Naive thymus-derived CD4-positive, alpha-beta T cell (primary cell): ENCODE measurements at regions of chrX and their contacts with region 1.

Region 1: GRCh38 chrX:80876877-80877276 is 67.2 kb upstream of the BRWD3 start:
- DNase-seq: peak in 5 of 9 donors; percentile 2 to 36 (median 23)
- ATAC-seq: no peak
- H3K4me3 ChIP-seq: no peak overlapping the region
- H3K4me3 Mint-ChIP-seq: no peak overlapping the region
- H3K27ac ChIP-seq: no peak overlapping the region
- H3K27ac Mint-ChIP-seq: no peak overlapping the region
- H3K4me1 ChIP-seq: no peaks in the 10 kb centered on the region
- H3K4me1 Mint-ChIP-seq: no peaks in the 10 kb centered on the region
- H3K27me3 ChIP-seq: no peaks in the 10 kb centered on the region
- H3K27me3 Mint-ChIP-seq: no peaks in the 10 kb centered on the region

Region 2: GRCh38 chrX:80747832-80748231 is 129.0 kb before region 1 on chrX:
- CTCF ChIA-PET with region 1: no interaction called
- POLR2A ChIA-PET with region 1: no interaction called
- intact Hi-C with region 1: no loop called
- DNase-seq: no peak
- ATAC-seq: no peak
- H3K4me3 ChIP-seq: no peak overlapping the region
- H3K4me3 Mint-ChIP-seq: no peak overlapping the region
- H3K27ac ChIP-seq: no peak overlapping the region
- H3K27ac Mint-ChIP-seq: peak overlapping the region in 3 of 9 donors; percentile 5 to 6 (median 5)
- H3K4me1 ChIP-seq: no peaks in the 10 kb centered on the region
- H3K4me1 Mint-ChIP-seq: peaks cover 4 to 22% (median 8%) of the 10 kb centered on the region in 7 donors
- H3K27me3 ChIP-seq: no peaks in the 10 kb centered on the region
- H3K27me3 Mint-ChIP-seq: no peaks in the 10 kb centered on the region

Region 3: DNA sequence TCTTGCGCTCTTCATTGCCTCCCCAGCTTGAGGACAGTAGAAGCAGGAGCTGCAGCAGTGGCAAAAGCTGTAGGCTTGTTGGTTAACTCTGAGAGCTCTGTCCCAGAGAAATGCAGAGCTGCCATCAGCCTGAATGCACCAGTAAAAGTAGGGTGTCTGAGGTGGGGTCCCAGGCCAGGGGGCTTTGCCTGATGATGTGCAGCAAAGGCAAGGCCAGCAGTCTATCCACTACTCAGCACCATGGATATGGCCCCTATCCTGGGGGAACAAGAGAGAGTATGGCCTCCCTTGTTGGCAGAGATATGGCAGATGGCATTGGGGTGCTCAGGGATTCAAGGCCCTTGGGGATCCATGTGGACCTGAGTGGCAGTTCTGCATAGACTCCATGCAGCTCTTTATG is 144.6 kb after region 1 on chrX:
- CTCF ChIA-PET with region 1: no interaction called
- POLR2A ChIA-PET with region 1: no interaction called
- intact Hi-C with region 1: no loop called
- DNase-seq: no peak
- ATAC-seq: no peak
- H3K4me3 ChIP-seq: no peak overlapping the region
- H3K4me3 Mint-ChIP-seq: no peak overlapping the region
- H3K27ac ChIP-seq: no peak overlapping the region
- H3K27ac Mint-ChIP-seq: no peak overlapping the region
- H3K4me1 ChIP-seq: no peaks in the 10 kb centered on the region
- H3K4me1 Mint-ChIP-seq: no peaks in the 10 kb centered on the region
- H3K27me3 ChIP-seq: no peaks in the 10 kb centered on the region
- H3K27me3 Mint-ChIP-seq: no peaks in the 10 kb centered on the region

Region 4: GRCh38 chrX:81121513-81122382 is 244.9 kb after region 1 on chrX:
- CTCF ChIA-PET with region 1: no interaction called
- POLR2A ChIA-PET with region 1: no interaction called
- intact Hi-C with region 1: loop called in 1 of 2 experiments (anchors 5 kb)
- DNase-seq: peak; percentile 71 to 87 (median 84)
- ATAC-seq: peak; percentile 97
- H3K4me3 ChIP-seq: peak overlapping the region; percentile 77
- H3K4me3 Mint-ChIP-seq: peak overlapping the region; percentile 85 to 98 (median 93)
- H3K27ac ChIP-seq: peak overlapping the region; percentile 52
- H3K27ac Mint-ChIP-seq: peak overlapping the region; percentile 63 to 90 (median 77)
- H3K4me1 ChIP-seq: no peaks in the 10 kb centered on the region
- H3K4me1 Mint-ChIP-seq: peaks cover 0 to 17% (median 6%) of the 10 kb centered on the region in 7 donors
- H3K27me3 ChIP-seq: no peaks in the 10 kb centered on the region
- H3K27me3 Mint-ChIP-seq: peaks cover 0 to 21% (median 0%) of the 10 kb centered on the region in 5 donors

Region 5: GRCh38 chrX:81195712-81196111 is 318.8 kb after region 1 on chrX:
- CTCF ChIA-PET with region 1: no interaction called
- POLR2A ChIA-PET with region 1: no interaction called
- intact Hi-C with region 1: loop called (anchors 2 kb)
- DNase-seq: peak in 8 of 9 donors; percentile 14 to 55 (median 40)
- ATAC-seq: peak; percentile 80
- H3K4me3 ChIP-seq: no peak overlapping the region
- H3K4me3 Mint-ChIP-seq: no peak overlapping the region
- H3K27ac ChIP-seq: no peak overlapping the region
- H3K27ac Mint-ChIP-seq: peak overlapping the region in 1 of 9 donors; percentile 7
- H3K4me1 ChIP-seq: no peaks in the 10 kb centered on the region
- H3K4me1 Mint-ChIP-seq: peaks cover 0 to 25% (median 15%) of the 10 kb centered on the region in 7 donors
- H3K27me3 ChIP-seq: no peaks in the 10 kb centered on the region
- H3K27me3 Mint-ChIP-seq: no peaks in the 10 kb centered on the region